HEK293T (cell line): ENCODE measurements at regions of chr5 and their contacts with region 1.

Region 1: DNA sequence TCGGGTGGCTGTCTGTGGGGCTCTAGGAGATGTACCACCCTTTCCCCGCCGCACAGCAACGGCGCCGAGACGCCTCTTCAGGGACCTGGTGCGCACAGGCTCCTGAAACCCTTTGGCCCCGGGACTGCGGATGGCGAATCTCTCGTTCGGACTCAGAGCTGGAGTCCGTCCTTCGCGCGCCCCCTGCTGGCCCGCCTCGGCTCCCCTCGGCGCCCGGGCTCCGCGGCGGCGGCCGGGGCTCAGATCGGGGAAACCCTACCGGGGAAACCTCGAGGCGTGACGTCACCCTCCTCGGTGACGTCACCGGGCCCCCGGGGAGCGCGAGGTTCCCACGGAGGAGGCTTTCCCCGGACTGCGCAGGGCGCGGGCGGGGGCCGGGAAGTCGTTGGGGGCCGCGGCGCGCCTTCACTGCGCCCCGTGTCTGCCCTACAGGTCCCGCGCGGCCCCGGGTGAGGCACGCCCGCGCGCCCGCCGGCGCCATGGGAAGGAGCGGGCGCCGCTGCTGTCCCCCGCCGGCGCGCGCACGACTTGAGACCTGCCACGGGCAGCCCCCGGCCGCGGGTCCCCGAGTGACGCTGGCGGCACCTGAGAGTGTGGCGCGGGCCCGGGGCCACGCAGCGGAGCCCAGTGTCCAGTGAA is 7.9 kb downstream of the PRR7 start:
- DNase-seq: peak; percentile 96

Region 2: DNA sequence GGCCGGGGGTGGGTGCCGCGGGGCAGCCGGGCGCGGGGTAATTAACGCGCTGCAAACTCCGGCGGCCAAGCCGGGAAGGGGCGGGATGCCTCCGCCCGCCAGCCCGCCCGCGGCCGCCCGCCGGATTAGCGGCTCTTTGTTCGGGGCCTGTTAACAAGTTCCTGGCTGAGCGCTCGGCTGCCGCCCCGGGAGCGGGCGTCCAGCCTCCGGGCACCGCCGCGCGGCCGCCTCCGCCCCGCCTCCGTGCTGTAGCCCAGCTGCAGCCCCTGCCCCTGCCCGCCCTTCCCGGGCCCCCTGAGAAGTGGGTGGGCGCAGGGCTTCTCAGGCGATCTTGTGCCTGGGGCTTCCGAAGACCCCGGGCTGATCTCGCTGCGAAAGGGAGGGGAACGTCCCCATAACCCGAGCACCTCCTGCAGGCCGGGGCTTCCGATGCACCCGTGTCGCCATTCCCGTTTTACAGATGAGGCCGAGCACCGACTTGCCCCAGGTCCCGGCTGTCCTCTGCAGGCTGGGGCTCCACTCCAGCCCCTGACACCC is 636.6 kb before region 1 on chr5:
- CTCF ChIA-PET with region 1: no interaction called
- POLR2A ChIA-PET with region 1: no interaction called
- DNase-seq: peak; percentile 84

Region 3: DNA sequence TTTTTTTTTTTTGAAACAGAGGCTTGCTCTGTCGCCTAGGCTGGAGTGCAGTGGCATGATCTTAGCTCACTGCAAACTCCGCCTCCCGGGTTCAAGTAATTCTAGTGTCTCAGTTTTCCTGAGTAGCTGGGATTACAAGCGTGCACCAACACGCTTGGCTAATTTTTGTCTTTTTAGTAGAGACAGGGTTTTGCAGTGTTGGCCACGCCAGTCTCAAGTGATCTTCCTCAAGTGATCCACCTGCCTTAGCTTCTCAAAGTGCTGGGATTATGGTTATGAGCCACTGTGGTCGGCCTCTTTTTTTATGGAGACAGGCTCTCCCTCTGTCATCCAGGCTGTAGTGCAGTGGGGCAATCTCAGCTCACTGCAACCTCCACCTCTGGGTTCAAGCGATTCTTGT is 233.9 kb before region 1 on chr5:
- CTCF ChIA-PET with region 1: no interaction called
- POLR2A ChIA-PET with region 1: no interaction called
- DNase-seq: no peak

Region 4: DNA sequence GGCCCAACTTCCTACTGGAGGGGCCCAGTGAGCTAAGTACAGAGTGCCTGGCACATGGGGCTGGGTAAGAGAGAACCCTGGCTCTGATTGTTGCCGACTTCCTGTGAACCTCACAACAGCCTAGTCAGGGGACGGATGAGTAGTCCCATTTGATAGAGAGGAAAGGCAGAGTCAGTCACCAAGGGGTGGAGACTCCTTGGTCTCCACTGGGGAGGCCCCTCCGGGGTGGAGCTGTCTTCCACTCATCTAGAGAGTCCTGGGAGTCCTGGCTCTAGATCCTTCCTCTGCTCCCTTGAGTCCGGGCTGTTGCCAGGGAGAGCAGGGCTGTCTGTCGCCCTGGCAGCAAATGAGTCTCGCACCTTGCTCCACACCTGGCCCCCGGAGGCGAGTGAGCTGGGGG is 20.1 kb before region 1 on chr5:
- CTCF ChIA-PET with region 1: no interaction called
- POLR2A ChIA-PET with region 1: no interaction called
- DNase-seq: no peak

Region 5: GRCh38 chr5:177473461-177474001 is 19.0 kb after region 1 on chr5 and contains the start of gene DBN1:
- CTCF ChIA-PET with region 1: interaction called, 10 read pairs
- POLR2A ChIA-PET with region 1: interaction called, 13 read pairs
- DNase-seq: peak; percentile 88

Region 6: DNA sequence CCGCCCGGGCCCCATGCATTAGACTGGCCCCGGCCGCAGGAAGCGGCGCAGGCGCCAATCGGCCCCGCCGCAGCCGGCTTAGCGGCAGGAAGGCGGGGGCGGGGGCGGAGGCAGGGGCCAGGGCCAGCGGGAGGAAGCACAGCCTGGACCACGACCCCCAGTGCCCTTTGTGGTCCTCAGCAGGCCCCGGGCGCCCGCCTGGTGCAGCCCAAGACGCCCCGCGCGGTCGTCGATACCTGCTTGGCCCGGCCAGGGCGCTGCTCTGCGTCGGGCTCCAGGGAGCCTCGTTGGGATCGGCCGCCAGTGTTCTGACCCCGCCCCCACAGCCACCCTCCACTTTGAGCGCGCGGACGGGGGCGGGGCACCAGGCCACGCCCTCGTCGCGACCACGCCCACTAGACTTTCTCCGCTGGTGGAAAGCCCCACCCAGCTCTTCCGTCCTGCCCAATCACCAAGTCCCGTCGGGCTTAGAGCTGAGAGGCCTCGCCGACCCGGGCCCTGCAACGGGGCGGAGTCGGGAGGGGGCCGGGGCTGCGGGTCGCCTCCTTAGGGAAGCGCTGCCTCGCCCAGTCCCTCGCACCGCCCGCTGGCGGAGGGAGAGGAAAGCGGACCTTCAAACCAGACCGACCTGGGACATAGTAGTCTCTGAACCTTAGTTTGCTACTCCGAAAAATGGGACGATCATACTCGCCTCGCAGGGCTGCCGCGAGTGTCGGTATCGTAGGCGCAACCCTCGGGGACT is 42.9 kb after region 1 on chr5 and contains the start of gene PDLIM7:
- CTCF ChIA-PET with region 1: interaction called, 23 read pairs
- POLR2A ChIA-PET with region 1: interaction called, 21 read pairs
- DNase-seq: peak; percentile 98